Mammary epithelial cell (primary cell): ENCODE measurements at regions of chr6 and their contacts with region 1.

Region 1: GRCh38 chr6:137094411-137095008 is 49.7 kb upstream of the IL20RA start:
- DNase-seq: peak; percentile 43
- H3K4me3 ChIP-seq: no peak overlapping the region
- H3K27ac ChIP-seq: no peak overlapping the region
- H3K4me1 ChIP-seq: no peaks in the 10 kb centered on the region
- H3K27me3 ChIP-seq: no peaks in the 10 kb centered on the region
- CTCF ChIP-seq: peak; percentile 77 to 80

Region 2: DNA sequence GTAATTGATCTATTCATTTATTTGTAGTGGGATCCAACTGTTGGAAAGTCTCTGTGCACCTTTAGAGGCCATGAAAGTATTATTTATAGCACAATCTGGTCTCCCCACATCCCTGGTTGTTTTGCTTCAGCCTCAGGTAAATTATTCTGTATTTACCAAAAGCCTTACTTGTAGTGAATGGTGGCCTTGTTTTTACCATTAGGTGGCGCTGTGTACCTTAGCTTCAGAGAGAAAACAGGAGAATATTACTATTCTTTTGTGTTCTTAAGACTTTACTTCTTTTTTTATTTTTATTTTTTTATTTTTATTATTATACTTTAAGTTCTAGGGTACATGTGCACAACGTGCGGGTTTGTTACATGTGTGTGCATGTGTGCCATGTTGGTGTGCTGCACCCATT is 248.5 kb before region 1 on chr6:
- CTCF ChIA-PET with region 1: no interaction called
- dilution Hi-C with region 1: no loop called
- in situ Hi-C with region 1: no loop called
- intact Hi-C with region 1: loop called (anchors 5 kb)
- DNase-seq: peak; percentile 29
- H3K4me3 ChIP-seq: no peak overlapping the region
- H3K27ac ChIP-seq: no peak overlapping the region
- H3K4me1 ChIP-seq: no peaks in the 10 kb centered on the region
- H3K27me3 ChIP-seq: no peaks in the 10 kb centered on the region
- CTCF ChIP-seq: peak; percentile 80 to 81

Region 3: GRCh38 chr6:137165375-137166246 is 71.1 kb after region 1 on chr6:
- CTCF ChIA-PET with region 1: interaction called, 4 read pairs
- dilution Hi-C with region 1: no loop called
- in situ Hi-C with region 1: no loop called
- intact Hi-C with region 1: loop called (anchors 1 kb)
- DNase-seq: peak; percentile 25
- H3K4me3 ChIP-seq: no peak overlapping the region
- H3K27ac ChIP-seq: no peak overlapping the region
- H3K4me1 ChIP-seq: peaks cover 16% of the 10 kb centered on the region
- H3K27me3 ChIP-seq: no peaks in the 10 kb centered on the region
- CTCF ChIP-seq: peak; percentile 34 to 58

Region 4: DNA sequence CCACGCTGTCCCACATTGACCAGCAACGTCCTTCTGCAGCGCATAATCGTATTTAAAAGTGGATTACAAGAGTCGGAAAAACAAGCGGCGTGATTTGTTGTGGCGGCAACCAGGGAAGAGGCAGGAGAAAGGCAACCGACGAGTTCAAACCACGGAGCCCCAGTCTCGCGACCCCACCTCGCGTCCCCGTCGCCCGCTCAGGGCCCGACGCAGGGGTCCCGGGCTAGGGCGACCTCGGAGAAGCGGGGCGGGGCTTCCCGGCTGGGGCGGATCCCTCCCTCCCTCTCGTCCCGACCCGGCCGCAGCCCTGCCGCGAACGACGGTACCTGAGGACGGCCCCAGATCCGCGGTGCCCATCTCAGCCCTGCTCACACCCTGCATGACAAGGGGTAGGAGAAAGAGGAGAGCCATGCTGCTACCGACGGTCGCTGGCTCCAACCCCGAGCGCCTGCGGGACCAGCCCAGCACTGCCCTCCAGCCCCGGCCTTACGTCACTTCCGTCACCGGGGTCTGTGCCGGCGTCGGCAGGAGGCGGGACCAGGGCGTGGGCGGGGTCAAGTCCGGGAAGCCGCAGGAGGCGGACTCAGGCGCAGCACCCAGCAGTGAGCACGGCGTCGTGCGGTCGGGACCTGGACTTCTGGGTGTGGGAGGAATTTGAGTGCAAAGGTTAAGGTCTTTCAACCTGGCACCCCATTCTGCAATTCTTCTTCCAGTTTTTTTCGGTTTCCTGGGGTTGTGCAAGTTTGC is 124.6 kb after region 1 on chr6 and contains the start of gene IFNGR1:
- CTCF ChIA-PET with region 1: no interaction called
- dilution Hi-C with region 1: no loop called
- in situ Hi-C with region 1: no loop called
- intact Hi-C with region 1: loop called (anchors 5 kb)
- DNase-seq: peak; percentile 90
- H3K4me3 ChIP-seq: peak within 1 kb of the TSS; percentile 78 to 98 (median 89)
- H3K27ac ChIP-seq: peak within 1 kb of the TSS; percentile 98
- H3K4me1 ChIP-seq: peaks cover 44% of the 10 kb centered on the region
- H3K27me3 ChIP-seq: no peaks in the 10 kb centered on the region
- CTCF ChIP-seq: no peak
- total RNA-seq, gene IFNGR1: 54.7 to 137 TPM

Region 5: DNA sequence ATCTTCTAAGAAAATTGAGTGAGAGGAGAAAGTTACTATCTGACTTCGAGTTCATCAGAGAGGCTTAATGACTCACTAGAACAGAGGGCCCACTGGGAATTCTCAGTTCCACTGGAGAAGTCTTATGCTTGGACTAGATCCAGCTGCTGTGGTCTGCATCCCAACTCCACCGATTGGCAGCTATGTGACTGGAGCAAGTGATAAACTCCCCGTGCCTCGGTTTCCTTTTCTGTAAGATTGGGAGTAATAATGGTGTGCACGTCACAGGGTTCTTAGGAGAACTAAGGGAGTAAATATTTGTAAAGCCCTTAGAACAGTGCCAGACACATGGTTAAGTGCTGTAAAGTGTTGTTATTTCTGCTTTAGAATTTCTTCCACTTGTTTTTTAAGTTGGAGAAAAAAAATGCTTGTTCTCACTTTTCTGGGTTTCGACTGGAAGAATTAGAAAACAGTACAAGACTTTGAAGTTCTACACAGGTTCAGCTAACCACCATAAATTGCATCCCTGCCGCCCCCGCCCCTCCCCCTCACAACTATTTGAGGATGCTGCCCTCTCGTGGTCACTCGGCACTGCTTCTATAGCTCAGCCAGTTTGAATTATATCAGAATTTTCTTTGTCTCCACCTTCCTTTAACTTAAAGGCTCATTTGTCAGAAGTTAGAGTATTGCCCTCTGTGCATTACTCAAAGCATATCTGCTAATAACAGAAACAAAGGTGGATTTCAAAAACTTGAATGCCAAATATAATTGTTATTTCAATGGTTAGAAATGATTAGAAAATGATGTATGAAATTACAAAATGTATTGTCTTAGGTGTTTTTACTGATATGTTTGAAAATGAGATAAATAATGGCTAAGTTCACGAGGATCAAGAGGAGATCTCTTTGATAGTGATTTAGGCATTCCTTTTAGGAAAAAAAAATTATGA is 219.7 kb after region 1 on chr6:
- CTCF ChIA-PET with region 1: interaction called, 7 read pairs
- dilution Hi-C with region 1: no loop called
- in situ Hi-C with region 1: loop called in 1 of 2 experiments (anchors 25 kb)
- intact Hi-C with region 1: loop called (anchors 1 kb)
- DNase-seq: peak; percentile 30
- H3K4me3 ChIP-seq: no peak overlapping the region
- H3K27ac ChIP-seq: no peak overlapping the region
- H3K4me1 ChIP-seq: peaks cover 5% of the 10 kb centered on the region
- H3K27me3 ChIP-seq: no peaks in the 10 kb centered on the region
- CTCF ChIP-seq: peak; percentile 83

Region 6: DNA sequence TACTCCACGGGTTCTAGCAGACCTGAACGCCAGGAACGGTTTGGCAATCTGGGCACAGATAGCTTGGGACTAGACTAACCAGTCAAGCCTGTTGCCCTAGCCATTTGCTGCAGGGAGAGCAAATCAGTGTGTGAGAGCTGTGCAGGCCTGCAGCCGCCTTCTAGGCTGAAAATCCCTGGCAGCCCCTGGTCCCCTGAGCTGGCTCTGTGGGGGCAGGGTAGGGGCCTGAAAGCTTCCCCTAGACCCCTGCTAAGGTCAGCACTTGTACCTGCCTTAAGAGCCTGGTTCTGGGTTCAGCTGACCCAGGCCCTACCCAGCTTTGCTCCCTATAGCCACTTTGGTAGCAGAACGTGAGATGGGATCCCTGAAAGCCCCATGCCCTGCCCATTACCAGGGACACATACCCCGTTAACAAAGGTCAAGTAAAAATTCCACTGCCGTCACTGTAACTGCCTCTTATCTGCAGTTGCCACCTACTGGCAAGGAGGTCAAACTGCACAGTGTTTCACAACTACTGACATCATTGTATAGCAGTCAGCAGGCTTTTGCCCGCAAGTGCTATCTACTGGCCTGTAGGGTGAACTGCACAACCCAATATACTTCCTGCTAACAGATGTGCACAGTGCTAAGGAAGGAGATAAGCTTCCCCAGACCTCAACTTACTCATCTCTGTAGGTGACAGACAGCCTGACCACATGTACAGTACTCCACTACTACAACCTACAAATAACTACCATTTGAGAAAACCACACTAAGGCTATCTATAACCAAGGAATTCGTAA is 494.7 kb after region 1 on chr6:
- CTCF ChIA-PET with region 1: interaction called, 3 read pairs
- dilution Hi-C with region 1: no loop called
- in situ Hi-C with region 1: no loop called
- intact Hi-C with region 1: loop called (anchors 1 kb)
- DNase-seq: peak; percentile 45
- H3K4me3 ChIP-seq: no peak overlapping the region
- H3K27ac ChIP-seq: no peak overlapping the region
- H3K4me1 ChIP-seq: no peaks in the 10 kb centered on the region
- H3K27me3 ChIP-seq: no peaks in the 10 kb centered on the region
- CTCF ChIP-seq: peak; percentile 44 to 75